ENCODE measurements at regions of chr19 and their contacts with region 1.

Region 1: DNA sequence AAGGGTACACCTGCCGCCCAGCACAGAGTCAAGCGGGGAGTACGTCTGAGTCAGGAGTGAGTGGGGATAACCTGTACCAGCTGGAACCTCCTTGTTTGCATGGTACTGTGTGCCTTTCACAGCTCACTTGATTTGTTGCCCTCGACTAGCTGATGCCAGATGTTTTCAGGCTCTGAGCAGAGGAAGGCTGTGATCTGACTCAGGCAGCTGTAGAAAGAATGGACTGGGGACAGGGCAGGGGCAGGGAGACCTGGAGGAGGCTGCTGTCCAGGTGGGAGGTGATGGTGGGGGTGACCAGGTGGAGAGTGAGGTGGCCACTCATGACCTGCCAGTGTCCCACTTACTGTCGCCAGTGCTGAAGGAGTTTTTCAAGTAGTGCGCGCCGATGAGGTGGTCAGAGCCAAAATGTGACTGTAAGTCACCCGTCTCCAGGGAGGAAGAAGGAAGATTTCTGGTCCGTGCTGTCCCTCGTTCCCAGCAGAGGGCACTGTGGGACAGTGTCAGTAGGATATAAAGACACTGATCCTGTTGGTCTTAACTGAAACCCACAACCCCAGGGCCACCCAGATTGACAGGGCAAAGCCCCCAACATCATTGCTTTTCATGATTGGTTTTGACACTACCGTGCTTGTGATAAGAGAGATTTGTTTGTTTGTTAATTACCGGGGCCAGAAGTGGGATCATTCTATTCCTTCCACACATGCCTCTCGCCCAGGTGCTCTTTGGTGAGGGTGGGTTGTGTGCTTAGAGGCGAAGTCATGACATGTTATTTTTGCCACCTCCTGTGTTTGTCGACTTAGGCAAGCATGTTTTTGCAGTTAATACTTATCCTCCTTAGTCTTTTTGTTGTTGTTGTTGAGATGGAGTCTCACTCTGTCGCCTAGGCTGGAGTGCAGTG is 128.4 kb downstream of the DPF1 start:
- DNase-seq: peak; percentile 33 to 81
- H3K4me3 ChIP-seq: no peak overlapping the region
- H3K4me1 ChIP-seq: no peaks in the 10 kb centered on the region
- H3K27me3 ChIP-seq: no peaks in the 10 kb centered on the region

Region 2: DNA sequence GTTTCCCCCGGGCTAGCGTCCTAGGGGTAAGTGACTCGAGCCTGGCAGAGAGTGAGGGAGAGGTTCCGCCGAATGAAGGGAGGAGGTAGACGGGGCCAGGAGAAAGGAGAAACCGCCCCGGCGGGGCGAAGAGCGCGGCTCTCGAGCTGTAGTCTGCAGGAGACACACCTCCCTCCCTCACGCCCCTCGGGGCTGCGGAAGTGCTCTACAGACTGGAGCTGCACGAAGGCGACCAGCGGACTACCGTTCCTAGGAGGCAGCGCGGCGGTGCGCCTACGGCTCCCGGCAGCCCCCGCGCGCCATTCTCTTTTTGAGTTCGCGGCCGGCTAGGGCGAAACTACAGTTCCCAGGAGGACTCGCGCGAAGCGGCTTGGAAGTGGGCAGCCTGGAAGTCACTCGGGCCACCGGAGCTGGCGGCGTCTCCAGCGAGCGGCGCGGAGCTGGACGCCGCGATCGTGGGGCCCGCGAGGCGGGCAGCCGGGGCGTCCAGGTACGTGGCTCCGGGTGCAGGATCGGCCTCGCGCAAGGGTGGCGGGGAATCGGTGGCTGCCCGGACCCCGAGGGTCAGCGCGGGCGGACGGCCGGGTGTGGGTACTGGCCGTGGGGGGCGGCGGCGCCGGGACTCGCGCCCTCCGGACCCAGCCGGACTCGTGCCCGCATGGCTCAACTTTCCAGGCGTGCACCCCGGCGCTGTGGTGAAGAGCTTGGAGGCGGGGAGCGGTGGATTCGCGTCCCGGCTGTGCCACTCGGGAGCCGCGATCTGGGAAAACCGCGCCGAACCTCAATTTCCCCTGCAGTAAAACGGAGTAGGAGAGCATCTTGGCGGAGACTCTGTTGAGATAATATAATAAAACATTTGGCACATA is 188.6 kb before region 1 on chr19 and contains the start of gene SIPA1L3:
- in situ Hi-C with region 1: loop called (anchors 25 kb)
- DNase-seq: peak; percentile 93 to 97
- H3K4me3 ChIP-seq: peak within 1 kb of the TSS; percentile 80
- H3K4me1 ChIP-seq: peaks cover 18% of the 10 kb centered on the region
- H3K27me3 ChIP-seq: no peaks in the 10 kb centered on the region

Region 3: GRCh38 chr19:38335949-38336637 is 240.4 kb after region 1 on chr19:
- in situ Hi-C with region 1: no loop called
- DNase-seq: peak; percentile 97 to 99
- H3K4me3 ChIP-seq: peak overlapping the region; percentile 49
- H3K4me1 ChIP-seq: peaks cover 25% of the 10 kb centered on the region
- H3K27me3 ChIP-seq: no peaks in the 10 kb centered on the region